ENCODE measurements at regions of chr10 and their contacts with region 1.

Region 1: GRCh38 chr10:110129490-110129889 is 77.9 kb upstream of the MXI1 start:
- DNase-seq: no peak
- H3K4me3 ChIP-seq: no peak overlapping the region
- H3K4me3 Mint-ChIP-seq: no peak overlapping the region
- H3K27ac ChIP-seq: peak overlapping the region in 1 of 2 donors; percentile 26
- H3K27ac Mint-ChIP-seq: peak overlapping the region in 1 of 7 donors; percentile 76
- H3K4me1 ChIP-seq: peaks cover 0 to 4% of the 10 kb centered on the region in 2 donors
- H3K4me1 Mint-ChIP-seq: peaks cover 3% of the 10 kb centered on the region
- H3K27me3 ChIP-seq: no peaks in the 10 kb centered on the region
- H3K27me3 Mint-ChIP-seq: peaks cover 0 to 2% (median 0%) of the 10 kb centered on the region in 3 donors
- CTCF ChIP-seq: no peak

Region 2: GRCh38 chr10:109883859-109884771 is 245.4 kb before region 1 on chr10:
- intact Hi-C with region 1: loop called in 1 of 2 experiments (anchors 10 kb)
- DNase-seq: peak; percentile 63 to 72 (median 63)
- H3K4me3 ChIP-seq: no peak overlapping the region
- H3K4me3 Mint-ChIP-seq: no peak overlapping the region
- H3K27ac ChIP-seq: no peak overlapping the region
- H3K27ac Mint-ChIP-seq: peak overlapping the region in 3 of 7 donors; percentile 11 to 46 (median 13)
- H3K4me1 ChIP-seq: peaks cover 0 to 3% of the 10 kb centered on the region in 2 donors
- H3K4me1 Mint-ChIP-seq: peaks cover 17% of the 10 kb centered on the region
- H3K27me3 ChIP-seq: no peaks in the 10 kb centered on the region
- H3K27me3 Mint-ChIP-seq: no peaks in the 10 kb centered on the region
- CTCF ChIP-seq: peak; percentile 95

Measured in CD14-positive monocyte (primary cell).